Pancreas (tissue), 10 donors: ENCODE measurements at regions of chr1 and their contacts with region 1.

Region 1: GRCh38 chr1:105793536-105794146 is 1262.8 kb upstream of the PRMT6 start:
- DNase-seq: peak in 2 of 6 donors; percentile 9 to 37
- ATAC-seq: peak in 3 of 4 donors; percentile 46 to 65 (median 52)
- H3K4me3 ChIP-seq: no peak overlapping the region
- H3K27ac ChIP-seq: no peak overlapping the region
- H3K4me1 ChIP-seq: no peaks in the 10 kb centered on the region
- H3K27me3 ChIP-seq: no peaks in the 10 kb centered on the region
- CTCF ChIP-seq: peak; percentile 9 to 55 (median 46)

Region 2: DNA sequence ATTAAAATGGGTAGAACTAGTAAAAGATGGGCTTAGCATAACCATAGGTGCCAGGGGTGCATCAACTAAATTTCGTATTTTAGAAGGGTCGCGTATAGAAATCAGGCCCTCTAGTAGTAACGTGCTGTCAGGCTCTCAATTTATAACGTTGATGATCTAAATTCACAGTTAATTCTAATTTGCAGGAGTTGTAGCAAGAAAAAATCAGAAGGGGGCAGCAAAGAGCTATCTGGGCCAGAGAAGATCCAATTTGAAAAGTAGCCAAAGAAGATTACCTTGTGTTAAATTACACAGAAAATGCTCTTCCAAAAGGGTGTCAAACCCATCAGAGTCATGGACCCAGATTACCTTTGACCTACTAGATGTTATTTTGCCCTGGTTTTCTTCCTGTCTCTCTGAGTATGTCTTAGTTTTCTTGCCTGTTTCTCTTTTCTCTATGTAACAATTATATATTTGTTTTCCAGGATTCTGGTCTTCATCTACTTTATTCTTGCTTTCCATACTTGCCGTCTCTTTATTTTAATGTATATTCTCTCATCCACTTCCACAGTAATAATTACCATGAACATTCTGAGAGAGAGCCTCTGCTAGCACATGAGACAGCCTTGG is 1013.1 kb before region 1 on chr1:
- intact Hi-C with region 1: loop called in 1 of 3 experiments (anchors 10 kb)
- DNase-seq: no peak
- ATAC-seq: peak in 3 of 4 donors; percentile 32 to 50 (median 35)
- H3K4me3 ChIP-seq: no peak overlapping the region
- H3K27ac ChIP-seq: no peak overlapping the region
- H3K4me1 ChIP-seq: no peaks in the 10 kb centered on the region
- H3K27me3 ChIP-seq: no peaks in the 10 kb centered on the region
- CTCF ChIP-seq: peak; percentile 34 to 65 (median 52)

Region 3: GRCh38 chr1:105934806-105935205 is 141.2 kb after region 1 on chr1:
- intact Hi-C with region 1: no loop called
- DNase-seq: no peak
- ATAC-seq: no peak
- H3K4me3 ChIP-seq: no peak overlapping the region
- H3K27ac ChIP-seq: no peak overlapping the region
- H3K4me1 ChIP-seq: no peaks in the 10 kb centered on the region
- H3K27me3 ChIP-seq: no peaks in the 10 kb centered on the region
- CTCF ChIP-seq: no peak